ENCODE measurements at regions of chr9 and their contacts with region 1.

Region 1: GRCh38 chr9:5582835-5583195 is 46.1 kb upstream of the RIC1 start:
- DNase-seq: peak in 7 of 42 donors; percentile 8 to 49 (median 17)

Region 2: GRCh38 chr9:5450359-5451091 is 132.3 kb before region 1 on chr9 and contains the start of gene CD274:
- intact Hi-C with region 1: loop called (anchors 10 kb)
- DNase-seq: peak; percentile 54 to 91 (median 82)